Activated CD4-positive, alpha-beta memory T cell treated with anti-CD3 and anti-CD28 coated beads, Interleukin-2, amount 10 ng/mL, durations not matched to agents 7 days and 5 days (primary cell): ENCODE measurements at regions of chr11 and their contacts with region 1.

Region 1: DNA sequence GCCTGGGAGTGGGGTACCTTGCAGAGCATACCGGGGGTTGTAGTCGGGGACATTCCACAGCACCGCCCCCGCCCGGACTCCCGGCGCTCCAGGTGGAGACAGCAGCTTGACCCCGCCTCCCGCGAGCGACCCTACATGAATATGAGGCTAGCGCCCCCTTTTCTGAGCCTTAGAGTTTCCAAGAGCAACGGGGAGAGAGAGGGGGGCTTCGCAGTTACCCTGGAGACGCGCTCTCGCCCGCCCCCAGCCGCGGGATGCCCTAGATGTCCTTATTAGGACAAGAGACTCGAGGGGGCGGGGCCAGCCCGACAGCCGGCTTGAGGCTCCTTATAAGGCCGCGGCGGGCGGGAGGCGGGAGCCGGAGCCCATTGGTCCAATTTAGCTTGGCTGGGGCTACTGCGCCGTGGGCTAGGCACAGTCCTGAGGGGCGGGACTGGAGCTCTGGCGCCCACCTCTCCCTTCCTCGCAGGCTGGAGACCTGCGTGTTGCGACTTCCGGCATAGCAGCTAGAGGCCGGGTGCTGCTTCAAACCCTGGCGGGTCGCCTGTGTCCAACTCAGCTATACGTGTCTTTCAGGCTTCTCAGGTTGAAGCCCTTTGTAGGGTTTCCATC is 927 bp upstream of the MUS81 start:
- DNase-seq: peak; percentile 99
- H3K4me3 Mint-ChIP-seq: peak overlapping the region; percentile 84
- H3K27ac Mint-ChIP-seq: peak overlapping the region; percentile 97
- H3K4me1 Mint-ChIP-seq: peaks cover 62% of the 10 kb centered on the region
- H3K27me3 Mint-ChIP-seq: no peaks in the 10 kb centered on the region

Region 2: GRCh38 chr11:65637794-65638317 is 221.4 kb before region 1 on chr11 and contains the start of gene SIPA1:
- CTCF ChIA-PET with region 1: no interaction called
- POLR2A ChIA-PET with region 1: interaction called, 14 read pairs
- DNase-seq: peak; percentile 69
- H3K4me3 Mint-ChIP-seq: peak within 1 kb of the TSS; percentile 95
- H3K27ac Mint-ChIP-seq: peak within 1 kb of the TSS; percentile 97
- H3K4me1 Mint-ChIP-seq: peaks cover 64% of the 10 kb centered on the region
- H3K27me3 Mint-ChIP-seq: no peaks in the 10 kb centered on the region
- total RNA-seq, gene SIPA1: 201 to 205 TPM

Region 3: DNA sequence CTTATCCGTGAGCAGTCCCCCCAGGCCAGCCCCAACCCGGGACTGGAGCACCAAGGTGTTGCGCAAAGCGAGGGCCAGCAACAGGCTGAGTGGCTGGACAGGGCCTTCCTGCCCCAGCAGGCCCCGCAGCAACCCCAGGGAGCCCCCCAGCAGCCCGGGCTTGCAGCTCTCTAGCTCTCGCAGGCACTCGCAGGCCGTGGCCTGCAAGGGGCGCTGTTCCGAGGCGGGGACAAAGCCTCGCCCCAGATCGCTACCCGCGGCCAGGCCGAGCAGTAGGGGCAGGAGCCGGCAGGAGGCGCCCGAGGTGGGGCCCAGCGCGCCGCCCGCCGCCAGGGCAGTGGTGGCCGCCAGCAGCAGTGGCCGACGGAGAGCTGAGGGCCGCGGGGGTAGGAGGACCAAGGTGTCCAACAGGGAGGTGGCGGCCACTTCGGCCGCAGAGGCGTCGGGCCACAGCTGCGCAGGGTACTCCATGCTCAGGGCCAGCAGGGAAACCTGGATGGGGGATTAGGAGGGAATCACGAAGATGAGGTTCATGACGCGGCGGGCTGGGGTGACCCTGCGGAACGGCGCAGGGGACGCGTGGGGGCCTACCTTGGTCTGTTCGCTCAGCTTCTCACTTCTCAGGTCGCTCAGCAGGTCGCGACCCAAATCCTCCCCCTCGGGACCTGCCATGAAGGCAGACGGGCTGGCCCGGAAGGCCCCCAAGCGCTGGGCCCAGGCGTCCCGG is 79.3 kb before region 1 on chr11:
- CTCF ChIA-PET with region 1: interaction called, 16 read pairs
- POLR2A ChIA-PET with region 1: interaction called, 32 read pairs
- DNase-seq: peak; percentile 88
- H3K4me3 Mint-ChIP-seq: peak overlapping the region; percentile 86
- H3K27ac Mint-ChIP-seq: peak overlapping the region; percentile 74
- H3K4me1 Mint-ChIP-seq: peaks cover 23% of the 10 kb centered on the region
- H3K27me3 Mint-ChIP-seq: peaks cover 17% of the 10 kb centered on the region

Region 4: DNA sequence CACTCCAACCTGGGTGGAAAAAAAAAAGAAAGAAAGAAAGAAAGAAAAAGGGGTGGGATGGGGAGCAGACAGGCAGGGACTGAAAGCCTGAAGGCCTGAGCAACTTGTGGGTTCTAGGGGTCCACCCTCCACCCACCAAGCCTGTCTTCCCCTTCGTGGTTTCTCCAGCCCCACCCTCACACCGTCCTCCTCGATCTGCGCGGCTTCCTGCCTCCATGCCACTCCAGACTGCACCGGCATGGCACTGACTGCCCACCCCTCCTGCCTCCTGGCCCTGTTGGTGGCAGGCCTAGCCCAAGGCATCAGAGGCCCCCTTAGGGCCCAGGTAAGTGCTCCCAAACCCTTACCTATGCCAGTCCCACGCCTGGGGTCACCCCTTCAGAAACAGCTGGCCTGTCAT is 20.3 kb after region 1 on chr11 and contains the start of gene CTSW:
- CTCF ChIA-PET with region 1: interaction called, 251 read pairs
- POLR2A ChIA-PET with region 1: interaction called, 284 read pairs
- DNase-seq: peak; percentile 64
- H3K4me3 Mint-ChIP-seq: peak within 1 kb of the TSS; percentile 67
- H3K27ac Mint-ChIP-seq: peak within 1 kb of the TSS; percentile 88
- H3K4me1 Mint-ChIP-seq: peaks cover 57% of the 10 kb centered on the region
- H3K27me3 Mint-ChIP-seq: no peaks in the 10 kb centered on the region
- total RNA-seq, gene CTSW: 75.9 to 80.5 TPM

Region 5: GRCh38 chr11:65900125-65900898 is 41.0 kb after region 1 on chr11 and contains the start of gene FOSL1:
- CTCF ChIA-PET with region 1: interaction called, 12 read pairs
- POLR2A ChIA-PET with region 1: interaction called, 33 read pairs
- DNase-seq: peak; percentile 93
- H3K4me3 Mint-ChIP-seq: peak within 1 kb of the TSS; percentile 69
- H3K27ac Mint-ChIP-seq: peak within 1 kb of the TSS; percentile 73
- H3K4me1 Mint-ChIP-seq: peaks cover 55% of the 10 kb centered on the region
- H3K27me3 Mint-ChIP-seq: peaks cover 4% of the 10 kb centered on the region
- total RNA-seq, gene FOSL1: 4.5 to 5.0 TPM

Region 6: GRCh38 chr11:65988791-65989592 is 129.7 kb after region 1 on chr11:
- CTCF ChIA-PET with region 1: interaction called, 12 read pairs
- POLR2A ChIA-PET with region 1: interaction called, 3 read pairs
- DNase-seq: peak; percentile 94
- H3K4me3 Mint-ChIP-seq: no peak overlapping the region
- H3K27ac Mint-ChIP-seq: peak overlapping the region; percentile 73
- H3K4me1 Mint-ChIP-seq: peaks cover 5% of the 10 kb centered on the region
- H3K27me3 Mint-ChIP-seq: no peaks in the 10 kb centered on the region